ENCODE measurements at regions of chr16 and their contacts with region 1.

Region 1: GRCh38 chr16:67260426-67261075 is 11.8 kb downstream of the SLC9A5 start:
- DNase-seq: peak; percentile 67
- ATAC-seq: peak; percentile 90
- H3K4me3 Mint-ChIP-seq: no peak overlapping the region
- H3K27ac Mint-ChIP-seq: no peak overlapping the region
- H3K4me1 Mint-ChIP-seq: peaks cover 2% of the 10 kb centered on the region
- H3K27me3 Mint-ChIP-seq: peaks cover 2% of the 10 kb centered on the region

Region 2: DNA sequence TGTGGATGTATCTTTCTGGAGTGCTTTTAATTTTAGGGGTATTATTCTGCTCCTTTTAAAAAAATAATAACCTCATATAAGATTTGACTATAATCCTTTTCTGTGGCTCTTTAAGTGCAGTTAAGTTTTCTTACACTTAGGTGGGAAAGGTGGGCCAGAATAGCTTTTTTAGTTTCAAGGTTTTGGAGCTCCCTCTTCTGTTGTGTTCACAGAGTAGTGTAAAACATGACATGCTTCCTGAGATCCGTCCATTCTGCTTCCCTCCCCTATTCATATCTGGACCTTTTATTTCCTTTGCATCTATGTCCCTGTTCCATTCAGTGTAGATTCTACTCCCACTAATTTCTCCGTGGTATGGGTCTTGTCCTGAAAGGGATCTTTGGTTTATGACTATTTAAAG is 78.9 kb after region 1 on chr16:
- CTCF ChIA-PET with region 1: no interaction called
- POLR2A ChIA-PET with region 1: no interaction called
- intact Hi-C with region 1: loop called (anchors 2 to 5 kb)
- DNase-seq: no peak
- ATAC-seq: no peak
- H3K4me3 Mint-ChIP-seq: no peak overlapping the region
- H3K27ac Mint-ChIP-seq: no peak overlapping the region
- H3K4me1 Mint-ChIP-seq: no peaks in the 10 kb centered on the region
- H3K27me3 Mint-ChIP-seq: peaks cover 3% of the 10 kb centered on the region

Region 3: GRCh38 chr16:67393035-67393787 is 132.7 kb after region 1 on chr16 and contains the start of gene TPPP3:
- CTCF ChIA-PET with region 1: interaction called, 10 read pairs
- POLR2A ChIA-PET with region 1: no interaction called
- intact Hi-C with region 1: loop called in 1 of 2 experiments (anchors 5 kb)
- DNase-seq: peak; percentile 70
- ATAC-seq: peak; percentile 74
- H3K4me3 Mint-ChIP-seq: peak within 1 kb of the TSS; percentile 18
- H3K27ac Mint-ChIP-seq: no peak within 1 kb of the TSS
- H3K4me1 Mint-ChIP-seq: peaks cover 9% of the 10 kb centered on the region
- H3K27me3 Mint-ChIP-seq: peaks cover 27% of the 10 kb centered on the region
- total RNA-seq, gene TPPP3: not detected

Region 4: DNA sequence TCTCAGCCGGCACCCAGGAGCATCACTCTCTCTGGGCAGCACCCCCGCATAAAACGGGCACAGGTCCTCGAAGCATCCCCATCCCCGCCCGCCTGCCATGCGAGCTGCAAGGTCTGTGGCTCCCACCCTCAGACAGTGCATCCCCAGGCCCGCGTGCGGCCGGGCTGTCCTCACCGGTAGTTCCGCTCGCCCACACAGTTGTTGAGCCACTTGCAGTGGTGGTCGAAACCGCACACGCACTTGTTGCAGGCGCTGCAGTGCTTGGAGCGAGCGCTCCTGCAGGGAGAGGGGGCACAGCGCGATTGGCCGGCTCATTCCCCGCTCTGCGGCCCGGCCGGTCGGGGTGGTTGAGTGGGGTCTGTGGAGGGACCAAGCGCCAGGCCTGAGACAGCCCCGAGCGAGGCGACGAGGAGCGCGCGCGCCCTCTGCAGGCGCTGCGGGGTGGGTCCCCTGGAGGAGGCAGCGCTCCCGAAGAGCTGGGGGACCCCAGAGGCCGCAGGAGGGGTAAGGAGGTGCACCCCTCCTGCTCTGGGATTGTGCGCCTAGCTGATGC is 138.7 kb after region 1 on chr16:
- CTCF ChIA-PET with region 1: interaction called, 21 read pairs
- POLR2A ChIA-PET with region 1: no interaction called
- intact Hi-C with region 1: loop called (anchors 1 to 5 kb)
- DNase-seq: peak; percentile 78
- ATAC-seq: peak; percentile 91
- H3K4me3 Mint-ChIP-seq: no peak overlapping the region
- H3K27ac Mint-ChIP-seq: no peak overlapping the region
- H3K4me1 Mint-ChIP-seq: peaks cover under 1% of the 10 kb centered on the region
- H3K27me3 Mint-ChIP-seq: peaks cover 21% of the 10 kb centered on the region

Region 5: DNA sequence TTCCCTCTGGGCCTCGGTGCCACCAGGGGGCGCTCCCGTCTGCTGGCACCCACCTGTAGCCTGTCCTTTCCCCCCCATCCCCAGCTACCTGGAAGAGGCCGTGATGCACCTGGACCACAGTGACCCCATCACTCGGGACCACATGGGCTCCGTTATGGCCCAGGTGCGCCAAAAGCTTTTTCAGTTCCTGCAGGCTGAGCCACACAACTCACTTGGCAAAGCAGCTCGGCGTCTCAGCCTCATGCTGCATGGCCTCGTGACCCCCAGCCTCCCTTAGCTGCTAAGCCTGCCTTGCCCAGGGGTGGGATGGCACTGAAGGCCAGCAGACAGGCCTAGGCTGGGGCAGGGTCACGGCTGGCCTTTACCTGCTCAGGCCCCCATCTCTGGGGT is 623.3 kb after region 1 on chr16:
- CTCF ChIA-PET with region 1: no interaction called
- POLR2A ChIA-PET with region 1: no interaction called
- intact Hi-C with region 1: no loop called
- DNase-seq: peak; percentile 85
- ATAC-seq: peak; percentile 92
- H3K4me3 Mint-ChIP-seq: no peak overlapping the region
- H3K27ac Mint-ChIP-seq: no peak overlapping the region
- H3K4me1 Mint-ChIP-seq: no peaks in the 10 kb centered on the region
- H3K27me3 Mint-ChIP-seq: no peaks in the 10 kb centered on the region